ENCODE measurements at regions of chr5 and their contacts with region 1.

Region 1: DNA sequence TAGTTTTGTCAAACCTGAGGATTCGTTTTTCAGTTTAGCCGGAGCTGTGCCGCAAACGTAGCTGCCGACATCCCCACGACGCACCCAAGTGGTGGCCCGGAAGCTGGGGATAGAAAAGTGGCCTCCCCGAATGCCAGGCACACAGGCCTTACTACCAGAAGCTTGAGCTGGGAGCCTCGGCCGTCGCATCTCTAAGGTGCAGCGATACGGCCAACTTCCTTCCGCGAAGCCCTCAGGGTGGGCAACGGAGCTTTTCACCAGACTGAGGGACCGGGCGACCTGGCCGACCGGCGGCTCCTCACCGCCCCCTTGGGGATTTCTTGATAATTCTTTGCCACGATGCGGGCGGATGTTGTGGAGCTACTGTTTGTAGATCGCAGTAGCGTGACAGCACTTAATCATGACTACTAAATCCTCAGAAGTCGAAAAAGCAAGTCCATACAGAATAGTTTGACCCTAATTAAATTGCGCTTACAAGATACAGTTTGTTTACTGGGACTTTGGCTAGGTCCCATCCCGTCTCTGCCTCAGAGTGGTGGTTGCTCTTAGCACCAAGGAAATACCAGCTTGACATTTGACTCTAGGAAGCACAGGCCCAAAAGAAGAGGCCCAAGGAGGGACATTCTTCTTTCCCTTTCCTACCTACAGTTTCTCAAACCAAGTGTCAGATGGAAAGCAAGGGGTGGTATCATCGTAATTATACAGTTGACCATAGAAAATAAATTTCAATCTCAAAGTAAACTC is 613 bp upstream of the TMEM267 start:
- DNase-seq: peak; percentile 78
- ATAC-seq: peak; percentile 72
- H3K4me3 Mint-ChIP-seq: peak overlapping the region; percentile 95
- H3K27ac Mint-ChIP-seq: peak overlapping the region; percentile 100
- H3K4me1 Mint-ChIP-seq: peaks cover 33% of the 10 kb centered on the region
- H3K27me3 Mint-ChIP-seq: no peaks in the 10 kb centered on the region
- CTCF ChIP-seq: no peak

Region 2: DNA sequence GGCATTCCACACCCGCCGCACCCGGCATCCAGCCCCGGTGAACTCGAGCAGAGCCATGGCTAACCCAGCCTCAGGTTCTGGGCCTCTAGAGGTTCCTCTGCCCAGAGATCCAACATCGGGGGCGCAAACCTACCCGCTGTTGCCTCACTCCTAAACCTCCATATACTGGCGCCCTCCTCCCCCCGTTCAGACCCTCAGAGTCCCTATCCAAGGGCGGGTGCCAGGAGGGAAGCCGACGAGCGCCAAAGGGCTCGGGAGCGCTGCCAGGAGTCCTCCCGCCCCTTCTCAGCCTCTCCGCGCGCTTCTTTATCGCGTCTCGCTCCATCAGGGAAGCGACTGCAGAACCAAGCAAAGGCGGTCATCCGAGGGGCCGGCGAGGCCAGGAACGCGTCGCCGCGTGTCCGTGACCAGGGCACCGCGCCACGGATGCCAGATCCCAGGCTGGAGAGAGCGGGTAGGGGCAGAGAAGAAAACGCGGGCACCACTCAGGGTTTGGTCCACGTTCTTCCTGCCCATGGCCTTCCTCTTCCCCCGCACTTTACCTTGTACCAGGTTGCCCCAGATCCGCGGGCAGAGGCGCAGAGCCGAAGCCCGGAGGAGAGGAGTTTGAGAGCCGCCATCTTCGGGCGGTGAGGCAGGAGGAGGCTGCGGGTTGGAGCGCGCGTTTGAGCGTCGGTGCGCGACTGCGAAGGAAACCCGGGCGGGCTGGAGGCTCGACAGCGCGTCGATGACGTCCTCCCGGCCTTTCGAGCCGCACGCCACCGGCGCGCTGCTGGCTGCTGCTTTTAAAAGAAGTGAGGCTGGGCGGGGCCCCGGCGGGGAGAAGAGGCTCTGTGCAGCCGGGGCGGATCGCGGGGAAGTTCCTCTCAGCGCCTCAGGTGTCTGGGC is 1614.3 kb before region 1 on chr5 and contains the start of gene OXCT1:
- CTCF ChIA-PET with region 1: no interaction called
- POLR2A ChIA-PET with region 1: no interaction called
- intact Hi-C with region 1: loop called (anchors 1 kb)
- DNase-seq: peak; percentile 82
- ATAC-seq: peak; percentile 95
- H3K4me3 Mint-ChIP-seq: peak within 1 kb of the TSS; percentile 93
- H3K27ac Mint-ChIP-seq: peak within 1 kb of the TSS; percentile 91
- H3K4me1 Mint-ChIP-seq: peaks cover 32% of the 10 kb centered on the region
- H3K27me3 Mint-ChIP-seq: no peaks in the 10 kb centered on the region
- CTCF ChIP-seq: no peak
- total RNA-seq, gene OXCT1: 27.3 and 27.4 TPM in 2 replicates

Region 3: DNA sequence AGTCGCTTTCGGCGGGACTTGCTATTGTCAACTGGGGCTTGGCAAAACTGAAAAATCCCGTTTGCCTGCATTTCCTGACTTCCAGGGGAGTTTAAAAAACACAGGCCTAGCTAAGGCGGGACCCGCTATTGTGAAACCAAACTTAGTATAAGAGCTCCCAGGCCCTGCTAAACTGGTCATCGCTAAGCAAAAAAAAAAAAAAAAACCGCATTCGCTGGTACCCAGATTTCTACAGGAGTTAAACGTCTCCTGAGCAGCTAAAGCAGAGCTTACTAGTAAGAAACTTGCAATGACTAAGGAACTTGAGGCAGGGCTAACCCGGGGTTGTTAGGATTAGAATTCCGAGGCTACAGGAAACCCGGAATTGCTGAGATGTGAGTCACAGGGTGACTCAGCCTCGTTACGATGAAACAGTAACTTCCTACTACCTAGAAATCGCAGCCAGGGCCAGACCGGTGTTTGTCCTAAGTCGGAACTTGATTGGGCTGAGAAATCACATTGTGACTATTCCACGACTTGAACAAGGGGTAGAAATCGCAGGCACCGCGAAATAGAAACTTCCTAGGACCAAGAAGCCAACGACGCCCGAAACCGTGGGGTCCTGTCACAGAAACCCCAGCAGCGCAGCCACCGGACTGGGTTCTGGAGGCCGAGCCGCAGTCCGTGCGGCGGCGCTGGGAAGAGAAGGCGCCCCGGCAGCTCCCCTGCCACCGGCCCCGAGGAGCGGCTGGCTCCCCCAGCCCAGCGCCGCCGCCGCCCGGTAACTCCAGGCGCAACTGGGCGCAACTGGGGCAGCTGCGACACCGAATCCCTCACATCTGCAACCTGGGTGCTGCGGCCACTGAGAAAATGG is 533.6 kb before region 1 on chr5:
- CTCF ChIA-PET with region 1: interaction called, 4 read pairs
- POLR2A ChIA-PET with region 1: interaction called, 18 read pairs
- intact Hi-C with region 1: no loop called
- DNase-seq: no peak
- ATAC-seq: peak; percentile 48
- H3K4me3 Mint-ChIP-seq: peak overlapping the region; percentile 94
- H3K27ac Mint-ChIP-seq: peak overlapping the region; percentile 98
- H3K4me1 Mint-ChIP-seq: peaks cover 33% of the 10 kb centered on the region
- H3K27me3 Mint-ChIP-seq: no peaks in the 10 kb centered on the region
- CTCF ChIP-seq: no peak

Region 4: GRCh38 chr5:43040287-43041098 is 443.8 kb before region 1 on chr5 and contains the start of gene ANXA2R:
- CTCF ChIA-PET with region 1: interaction called, 4 read pairs
- POLR2A ChIA-PET with region 1: interaction called, 36 read pairs
- intact Hi-C with region 1: no loop called
- DNase-seq: peak; percentile 78
- ATAC-seq: peak; percentile 62
- H3K4me3 Mint-ChIP-seq: peak within 1 kb of the TSS; percentile 96
- H3K27ac Mint-ChIP-seq: peak within 1 kb of the TSS; percentile 98
- H3K4me1 Mint-ChIP-seq: peaks cover 53% of the 10 kb centered on the region
- H3K27me3 Mint-ChIP-seq: no peaks in the 10 kb centered on the region
- CTCF ChIP-seq: peak; percentile 39
- total RNA-seq, gene ANXA2R: 6.7 and 7.9 TPM in 2 replicates

Region 5: DNA sequence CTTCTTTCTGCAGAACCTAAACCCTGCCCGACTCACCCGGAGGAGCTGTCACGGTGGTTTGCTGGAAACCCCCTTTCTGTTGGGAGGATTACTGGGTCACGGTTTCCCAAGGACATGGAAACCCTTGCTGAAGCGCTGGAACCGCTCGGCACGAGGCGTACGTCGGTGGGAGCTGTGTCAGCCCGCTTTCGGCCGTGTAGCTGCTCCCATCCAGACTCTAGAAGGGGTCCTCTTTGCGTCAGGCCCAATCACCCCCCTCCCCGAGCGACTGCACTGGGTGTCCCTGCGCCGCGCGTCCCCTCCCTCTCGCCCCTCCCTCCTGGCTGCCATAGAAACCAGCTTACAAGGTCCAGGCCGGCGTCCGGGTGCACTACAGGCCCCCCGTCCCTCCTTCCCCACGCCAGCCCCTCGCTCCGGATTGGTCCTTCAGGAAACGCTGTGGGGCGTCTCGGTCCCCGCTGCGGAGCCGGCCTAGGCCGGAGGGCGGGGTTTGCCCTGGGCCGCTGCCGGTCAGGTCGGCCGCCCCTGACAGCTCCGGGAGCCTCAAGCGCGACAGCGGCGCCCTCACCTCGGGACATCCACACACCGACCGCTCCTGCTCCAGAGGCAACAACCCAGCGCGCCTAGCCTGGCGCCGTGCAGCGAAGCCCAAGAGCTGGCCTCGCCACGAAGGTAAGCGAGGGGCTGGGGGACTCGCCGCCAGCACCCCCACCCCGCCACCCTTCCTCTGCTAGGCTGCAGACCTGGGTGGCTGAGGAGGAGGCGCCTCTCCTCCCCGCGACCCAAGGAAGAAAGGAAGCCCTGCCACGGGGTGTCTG is 292.3 kb before region 1 on chr5 and contains the start of gene NIM1K:
- CTCF ChIA-PET with region 1: no interaction called
- POLR2A ChIA-PET with region 1: interaction called, 5 read pairs
- intact Hi-C with region 1: loop called (anchors 2 kb)
- DNase-seq: peak; percentile 45
- ATAC-seq: peak; percentile 65
- H3K4me3 Mint-ChIP-seq: peak within 1 kb of the TSS; percentile 84
- H3K27ac Mint-ChIP-seq: no peak within 1 kb of the TSS
- H3K4me1 Mint-ChIP-seq: peaks cover 28% of the 10 kb centered on the region
- H3K27me3 Mint-ChIP-seq: peaks cover 19% of the 10 kb centered on the region
- CTCF ChIP-seq: no peak
- total RNA-seq, gene NIM1K: 0.39 and 0.51 TPM in 2 replicates

Region 6: DNA sequence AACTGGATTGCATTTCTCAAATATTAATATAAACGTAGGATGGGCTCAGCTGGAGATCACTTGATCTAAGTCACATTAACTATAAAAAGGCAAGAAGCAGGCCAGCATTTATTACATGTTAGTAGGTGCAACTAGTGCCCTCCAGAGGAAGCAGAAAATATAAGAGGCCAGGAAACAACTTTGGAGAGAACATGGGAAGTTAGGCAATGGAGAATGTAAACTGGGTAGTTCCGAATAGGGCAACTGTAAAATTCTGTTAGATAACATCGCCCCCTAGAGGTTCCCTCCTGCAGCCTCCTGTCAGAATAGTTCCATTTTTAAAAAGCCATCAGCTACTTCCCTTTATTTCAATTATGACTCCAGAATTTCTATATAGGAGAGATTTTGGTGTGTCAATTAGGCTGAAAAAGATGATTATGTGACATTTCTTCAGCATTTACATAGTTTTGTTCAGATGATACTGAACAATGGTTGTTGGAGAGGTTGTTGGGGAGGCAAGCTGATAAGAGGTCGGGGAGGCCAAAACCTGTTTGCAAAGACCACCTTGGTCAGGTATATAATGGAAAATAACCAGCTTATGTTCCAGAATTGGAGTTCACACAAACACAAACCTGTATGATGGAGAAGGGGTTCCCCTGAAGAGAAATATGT is 94.5 kb before region 1 on chr5:
- CTCF ChIA-PET with region 1: interaction called, 12 read pairs
- POLR2A ChIA-PET with region 1: interaction called, 12 read pairs
- intact Hi-C with region 1: loop called (anchors 2 kb)
- DNase-seq: no peak
- ATAC-seq: peak; percentile 84
- H3K4me3 Mint-ChIP-seq: no peak overlapping the region
- H3K27ac Mint-ChIP-seq: peak overlapping the region; percentile 30
- H3K4me1 Mint-ChIP-seq: peaks cover 16% of the 10 kb centered on the region
- H3K27me3 Mint-ChIP-seq: no peaks in the 10 kb centered on the region
- CTCF ChIP-seq: peak; percentile 64

Region 7: GRCh38 chr5:43602461-43603343 is 118.4 kb after region 1 on chr5 and contains the start of gene NNT:
- CTCF ChIA-PET with region 1: interaction called, 4 read pairs
- POLR2A ChIA-PET with region 1: interaction called, 86 read pairs
- intact Hi-C with region 1: loop called (anchors 1 kb)
- DNase-seq: peak; percentile 76
- ATAC-seq: peak; percentile 69
- H3K4me3 Mint-ChIP-seq: peak within 1 kb of the TSS; percentile 95
- H3K27ac Mint-ChIP-seq: peak within 1 kb of the TSS; percentile 93
- H3K4me1 Mint-ChIP-seq: peaks cover 42% of the 10 kb centered on the region
- H3K27me3 Mint-ChIP-seq: no peaks in the 10 kb centered on the region
- CTCF ChIP-seq: no peak
- total RNA-seq, gene NNT: 59.0 and 63.0 TPM in 2 replicates